MCF 10A (cell line): ENCODE measurements at regions of chr1 and their contacts with region 1.

Region 1: DNA sequence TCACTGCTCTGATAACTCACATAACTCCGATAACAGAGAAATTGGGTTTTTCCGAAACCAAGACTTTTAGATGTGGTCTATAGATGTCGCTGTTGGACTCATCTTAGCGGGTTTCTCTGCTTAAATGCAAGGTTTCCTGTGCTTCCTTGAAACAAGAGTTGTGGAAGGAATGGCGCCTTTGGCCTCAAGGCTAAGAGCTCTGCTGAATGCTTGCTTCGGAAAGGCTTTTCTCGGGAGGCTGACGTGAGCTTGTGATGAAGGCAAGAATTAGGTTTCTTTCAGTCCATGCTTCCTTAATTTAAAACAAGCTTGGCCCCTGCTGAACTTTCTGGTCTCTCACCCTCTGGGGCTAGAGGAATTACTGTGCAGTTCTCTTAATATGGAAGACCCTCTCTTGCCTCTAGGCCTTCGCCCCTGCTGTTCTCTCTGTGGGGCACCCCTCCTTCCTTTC is 113.5 kb downstream of the MAP3K21 start:
- DNase-seq: peak; percentile 90
- H3K4me3 Mint-ChIP-seq: no peak overlapping the region
- H3K27ac Mint-ChIP-seq: no peak overlapping the region
- H3K4me1 Mint-ChIP-seq: peaks cover 18% of the 10 kb centered on the region
- H3K27me3 Mint-ChIP-seq: no peaks in the 10 kb centered on the region
- CTCF ChIP-seq: peak; percentile 99

Region 2: GRCh38 chr1:233020426-233020825 is 420.6 kb before region 1 on chr1:
- CTCF ChIA-PET with region 1: no interaction called
- POLR2A ChIA-PET with region 1: no interaction called
- intact Hi-C with region 1: no loop called
- DNase-seq: no peak
- H3K4me3 Mint-ChIP-seq: no peak overlapping the region
- H3K27ac Mint-ChIP-seq: no peak overlapping the region
- H3K4me1 Mint-ChIP-seq: no peaks in the 10 kb centered on the region
- H3K27me3 Mint-ChIP-seq: no peaks in the 10 kb centered on the region
- CTCF ChIP-seq: no peak

Region 3: DNA sequence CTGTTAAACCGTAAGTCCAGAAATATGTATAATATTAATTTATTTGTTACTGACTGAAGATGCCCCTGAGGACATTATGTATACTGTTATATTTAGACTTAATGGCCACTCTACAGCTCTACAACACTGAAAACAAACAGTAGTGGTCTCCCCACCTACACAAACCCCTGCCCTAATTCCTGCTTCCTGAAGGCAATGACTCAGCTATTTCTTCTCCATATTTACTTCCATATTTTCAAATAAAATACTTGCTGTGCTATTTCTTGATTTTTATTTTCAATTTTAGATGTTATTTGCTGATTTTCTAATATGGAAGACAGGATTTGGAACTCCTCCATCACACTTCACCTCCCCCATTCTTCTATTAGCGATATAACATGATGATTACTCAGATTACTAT is 243.0 kb before region 1 on chr1:
- CTCF ChIA-PET with region 1: no interaction called
- POLR2A ChIA-PET with region 1: no interaction called
- intact Hi-C with region 1: no loop called
- DNase-seq: no peak
- H3K4me3 Mint-ChIP-seq: no peak overlapping the region
- H3K27ac Mint-ChIP-seq: peak overlapping the region; percentile 40
- H3K4me1 Mint-ChIP-seq: peaks cover 10% of the 10 kb centered on the region
- H3K27me3 Mint-ChIP-seq: no peaks in the 10 kb centered on the region
- CTCF ChIP-seq: no peak

Region 4: GRCh38 chr1:233281711-233282581 is 159.0 kb before region 1 on chr1:
- CTCF ChIA-PET with region 1: no interaction called
- POLR2A ChIA-PET with region 1: no interaction called
- intact Hi-C with region 1: no loop called
- DNase-seq: no peak
- H3K4me3 Mint-ChIP-seq: no peak overlapping the region
- H3K27ac Mint-ChIP-seq: peak overlapping the region; percentile 4
- H3K4me1 Mint-ChIP-seq: peaks cover 10% of the 10 kb centered on the region
- H3K27me3 Mint-ChIP-seq: no peaks in the 10 kb centered on the region
- CTCF ChIP-seq: no peak

Region 5: GRCh38 chr1:233364695-233365539 is 76.1 kb before region 1 on chr1:
- CTCF ChIA-PET with region 1: interaction called, 37 read pairs
- POLR2A ChIA-PET with region 1: no interaction called
- intact Hi-C with region 1: no loop called
- DNase-seq: peak; percentile 56
- H3K4me3 Mint-ChIP-seq: no peak overlapping the region
- H3K27ac Mint-ChIP-seq: peak overlapping the region; percentile 54
- H3K4me1 Mint-ChIP-seq: peaks cover 17% of the 10 kb centered on the region
- H3K27me3 Mint-ChIP-seq: no peaks in the 10 kb centered on the region
- CTCF ChIP-seq: peak; percentile 72

Region 6: DNA sequence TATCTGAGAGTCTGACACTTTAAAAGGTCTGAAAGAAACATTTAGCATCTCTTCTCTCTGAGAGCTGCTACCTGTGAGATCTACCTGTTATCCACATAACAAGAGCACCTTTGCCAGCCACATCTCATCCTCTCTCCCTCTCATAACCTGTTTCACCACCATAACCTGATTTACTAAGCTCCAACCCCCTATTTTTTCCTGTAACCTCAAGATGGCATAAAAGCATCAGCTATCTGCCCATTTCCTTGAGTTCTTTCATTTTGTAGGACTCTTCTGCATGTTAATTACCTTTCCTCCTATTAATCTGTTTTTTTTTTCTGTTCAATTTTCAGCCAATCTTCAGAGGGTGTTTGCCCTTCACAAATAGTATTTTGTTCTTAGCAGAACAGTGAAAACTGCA is 36.4 kb after region 1 on chr1:
- CTCF ChIA-PET with region 1: interaction called, 50 read pairs
- POLR2A ChIA-PET with region 1: interaction called, 5 read pairs
- intact Hi-C with region 1: no loop called
- DNase-seq: peak; percentile 23
- H3K4me3 Mint-ChIP-seq: no peak overlapping the region
- H3K27ac Mint-ChIP-seq: no peak overlapping the region
- H3K4me1 Mint-ChIP-seq: peaks cover 31% of the 10 kb centered on the region
- H3K27me3 Mint-ChIP-seq: no peaks in the 10 kb centered on the region
- CTCF ChIP-seq: peak; percentile 30

Region 7: GRCh38 chr1:233635765-233636502 is 195.0 kb after region 1 on chr1:
- CTCF ChIA-PET with region 1: interaction called, 15 read pairs
- POLR2A ChIA-PET with region 1: no interaction called
- intact Hi-C with region 1: no loop called
- DNase-seq: peak; percentile 78
- H3K4me3 Mint-ChIP-seq: no peak overlapping the region
- H3K27ac Mint-ChIP-seq: no peak overlapping the region
- H3K4me1 Mint-ChIP-seq: peaks cover 26% of the 10 kb centered on the region
- H3K27me3 Mint-ChIP-seq: no peaks in the 10 kb centered on the region
- CTCF ChIP-seq: no peak

Region 8: DNA sequence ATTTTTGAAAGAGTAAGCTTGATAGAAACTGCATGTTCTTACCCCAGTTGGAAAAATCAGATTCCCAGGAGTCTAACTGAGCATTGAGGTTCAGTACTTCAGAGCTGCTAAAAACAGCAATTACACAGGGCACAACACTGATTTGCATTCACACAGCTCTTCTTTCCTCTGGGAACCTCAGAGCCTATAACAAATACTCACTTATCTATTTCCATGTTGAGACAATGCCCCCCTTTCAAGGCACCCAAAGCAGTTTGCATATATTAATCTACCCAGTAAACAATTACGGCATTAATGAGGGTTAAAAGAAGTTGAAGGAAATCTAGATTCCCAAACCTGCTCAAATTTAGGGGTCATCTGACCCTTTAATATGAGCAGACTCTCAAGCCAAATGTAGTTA is 336.6 kb after region 1 on chr1:
- CTCF ChIA-PET with region 1: interaction called, 44 read pairs
- POLR2A ChIA-PET with region 1: no interaction called
- intact Hi-C with region 1: no loop called
- DNase-seq: no peak
- H3K4me3 Mint-ChIP-seq: no peak overlapping the region
- H3K27ac Mint-ChIP-seq: no peak overlapping the region
- H3K4me1 Mint-ChIP-seq: no peaks in the 10 kb centered on the region
- H3K27me3 Mint-ChIP-seq: no peaks in the 10 kb centered on the region
- CTCF ChIP-seq: no peak

Region 9: GRCh38 chr1:234040446-234041306 is 599.7 kb after region 1 on chr1:
- CTCF ChIA-PET with region 1: interaction called, 11 read pairs
- POLR2A ChIA-PET with region 1: no interaction called
- intact Hi-C with region 1: no loop called
- DNase-seq: peak; percentile 29
- H3K4me3 Mint-ChIP-seq: no peak overlapping the region
- H3K27ac Mint-ChIP-seq: no peak overlapping the region
- H3K4me1 Mint-ChIP-seq: peaks cover 7% of the 10 kb centered on the region
- H3K27me3 Mint-ChIP-seq: no peaks in the 10 kb centered on the region
- CTCF ChIP-seq: no peak